H1 (cell line): ENCODE measurements at regions of chr14 and their contacts with region 1.

Region 1: GRCh38 chr14:39015360-39015961 is 87.6 kb downstream of the SEC23A start:
- DNase-seq: no peak
- H3K4me3 ChIP-seq: no peak overlapping the region
- H3K27ac ChIP-seq: no peak overlapping the region
- H3K4me1 ChIP-seq: no peaks in the 10 kb centered on the region
- H3K27me3 ChIP-seq: no peaks in the 10 kb centered on the region
- CTCF ChIP-seq: peak in 2 of 3 experiments; percentile 52 to 72; a peak in 2 of 4 replicates
- EP300 ChIP-seq: no peak
- POLR2A ChIP-seq: no peak
- RAD21 ChIP-seq: peak; percentile 80 to 85

Region 2: DNA sequence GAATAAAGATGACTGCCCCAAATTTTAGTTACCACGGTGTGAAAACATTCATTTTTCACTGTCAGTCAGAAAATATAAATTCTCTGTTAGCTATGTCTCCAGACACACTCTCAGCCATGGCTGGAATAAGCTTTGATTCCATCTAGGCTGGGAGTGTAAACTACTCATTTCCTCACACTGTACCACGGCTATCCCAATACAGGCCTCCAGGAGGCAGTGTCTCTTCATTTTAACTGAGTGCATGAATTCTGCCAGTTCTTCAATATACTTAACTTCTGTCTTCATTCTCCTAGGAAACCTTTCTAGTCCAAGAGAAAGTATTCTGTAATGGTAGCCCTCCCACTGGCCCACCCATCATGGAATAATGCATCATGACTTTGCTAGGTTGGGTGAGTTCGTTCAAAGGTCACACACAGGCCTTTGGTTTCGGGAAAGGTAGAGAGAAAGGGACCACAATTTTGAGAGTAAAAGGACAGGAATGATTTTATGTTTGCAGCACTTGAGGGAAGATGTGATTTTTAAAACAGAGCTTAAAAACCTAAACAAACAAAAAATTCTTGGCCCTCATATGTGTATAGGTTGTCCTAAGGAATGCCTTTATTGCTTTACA is 293.5 kb before region 1 on chr14:
- CTCF ChIA-PET with region 1: interaction called, 49 read pairs
- POLR2A ChIA-PET with region 1: no interaction called
- DNase-seq: peak; percentile 19 to 88
- H3K4me3 ChIP-seq: no peak overlapping the region
- H3K27ac ChIP-seq: no peak overlapping the region
- H3K4me1 ChIP-seq: no peaks in the 10 kb centered on the region
- H3K27me3 ChIP-seq: peaks cover 0 to 1% (median 0%) of the 10 kb centered on the region in 4 experiments; a peak in 1 of 7 replicates
- CTCF ChIP-seq: peak in 2 of 3 experiments; percentile 89 to 95; a peak in 3 of 4 replicates
- EP300 ChIP-seq: no peak
- POLR2A ChIP-seq: no peak
- RAD21 ChIP-seq: peak; percentile 93 to 96

Region 3: DNA sequence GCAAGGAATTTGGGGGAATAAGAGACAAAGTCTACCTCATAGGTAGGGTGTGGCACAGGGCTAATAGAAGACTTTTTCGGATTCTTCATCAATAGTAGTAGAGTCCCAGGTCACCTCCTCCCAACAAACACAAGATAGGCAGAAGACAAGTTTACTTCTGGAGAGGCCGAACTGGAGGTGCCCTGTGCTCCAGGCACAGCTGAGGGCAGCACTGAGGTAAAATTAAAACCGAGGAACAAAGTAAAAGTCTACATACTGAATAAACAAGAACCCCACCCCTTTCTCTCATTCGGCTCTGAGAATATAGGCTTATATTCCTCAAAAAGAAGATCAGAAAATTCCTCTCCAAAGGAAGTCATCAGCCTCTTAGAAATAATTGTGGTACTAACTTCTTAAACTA is 74.0 kb before region 1 on chr14:
- CTCF ChIA-PET with region 1: interaction called, 11 read pairs
- POLR2A ChIA-PET with region 1: no interaction called
- DNase-seq: no peak
- H3K4me3 ChIP-seq: no peak overlapping the region
- H3K27ac ChIP-seq: no peak overlapping the region
- H3K4me1 ChIP-seq: no peaks in the 10 kb centered on the region
- H3K27me3 ChIP-seq: no peaks in the 10 kb centered on the region
- CTCF ChIP-seq: peak in 2 of 3 experiments; percentile 15 to 29; a peak in 1 of 4 replicates
- EP300 ChIP-seq: no peak
- POLR2A ChIP-seq: no peak
- RAD21 ChIP-seq: peak in 1 of 2 experiments; percentile 28; a peak in 1 of 4 replicates

Region 4: GRCh38 chr14:39005044-39005880 is 10.2 kb before region 1 on chr14:
- CTCF ChIA-PET with region 1: interaction called, 28 read pairs
- POLR2A ChIA-PET with region 1: no interaction called
- DNase-seq: no peak
- H3K4me3 ChIP-seq: no peak overlapping the region
- H3K27ac ChIP-seq: no peak overlapping the region
- H3K4me1 ChIP-seq: no peaks in the 10 kb centered on the region
- H3K27me3 ChIP-seq: no peaks in the 10 kb centered on the region
- CTCF ChIP-seq: no peak
- EP300 ChIP-seq: no peak
- POLR2A ChIP-seq: no peak
- RAD21 ChIP-seq: no peak